Pancreas (tissue), 10 donors: ENCODE measurements at regions of chr17 and their contacts with region 1.

Region 1: DNA sequence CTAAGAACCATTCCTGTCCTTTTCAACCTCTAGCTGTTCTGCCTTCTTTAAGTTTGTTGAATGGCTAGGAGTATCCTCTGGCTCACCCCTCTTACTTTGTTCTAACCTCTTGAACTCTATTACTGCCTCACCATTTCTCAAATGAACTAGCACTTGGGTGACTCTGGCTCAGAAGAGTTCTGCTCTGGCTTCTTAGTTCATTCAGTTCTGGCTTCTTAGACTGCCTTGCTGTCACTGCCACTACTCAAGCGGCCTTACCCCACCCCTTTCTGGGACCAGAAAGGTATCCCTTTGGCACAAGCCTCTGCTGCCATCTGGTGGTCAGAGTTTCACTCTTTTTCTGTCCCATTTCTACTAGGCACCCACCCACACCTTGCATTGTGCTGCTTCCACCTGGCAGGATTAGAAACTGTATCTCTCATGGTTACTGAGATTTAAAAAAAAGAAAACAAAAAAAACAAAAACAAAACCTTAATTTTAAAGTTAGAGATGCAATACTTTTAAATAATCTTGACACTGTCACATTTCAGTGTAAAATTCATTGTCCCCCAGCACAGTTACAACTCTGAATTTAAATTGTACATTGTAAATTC is 6.8 kb upstream of the ABCA10 start:
- DNase-seq: peak in 5 of 6 donors; percentile 46 to 71 (median 60)
- ATAC-seq: peak; percentile 57 to 95 (median 86)
- H3K4me3 ChIP-seq: no peak overlapping the region
- H3K27ac ChIP-seq: no peak overlapping the region
- H3K4me1 ChIP-seq: no peaks in the 10 kb centered on the region
- H3K27me3 ChIP-seq: no peaks in the 10 kb centered on the region
- CTCF ChIP-seq: peak; percentile 13 to 56 (median 44)

Region 2: GRCh38 chr17:68771867-68772515 is 463.4 kb before region 1 on chr17:
- intact Hi-C with region 1: loop called in 2 of 3 experiments (anchors 5 to 10 kb)
- DNase-seq: no peak
- ATAC-seq: peak in 3 of 4 donors; percentile 79 to 87 (median 87)
- H3K4me3 ChIP-seq: no peak overlapping the region
- H3K27ac ChIP-seq: peak overlapping the region in 1 of 4 donors; percentile 22
- H3K4me1 ChIP-seq: peaks cover 0 to 4% (median 0%) of the 10 kb centered on the region in 3 donors
- H3K27me3 ChIP-seq: no peaks in the 10 kb centered on the region
- CTCF ChIP-seq: peak in 3 of 4 donors; percentile 34 to 48 (median 35)

Region 3: DNA sequence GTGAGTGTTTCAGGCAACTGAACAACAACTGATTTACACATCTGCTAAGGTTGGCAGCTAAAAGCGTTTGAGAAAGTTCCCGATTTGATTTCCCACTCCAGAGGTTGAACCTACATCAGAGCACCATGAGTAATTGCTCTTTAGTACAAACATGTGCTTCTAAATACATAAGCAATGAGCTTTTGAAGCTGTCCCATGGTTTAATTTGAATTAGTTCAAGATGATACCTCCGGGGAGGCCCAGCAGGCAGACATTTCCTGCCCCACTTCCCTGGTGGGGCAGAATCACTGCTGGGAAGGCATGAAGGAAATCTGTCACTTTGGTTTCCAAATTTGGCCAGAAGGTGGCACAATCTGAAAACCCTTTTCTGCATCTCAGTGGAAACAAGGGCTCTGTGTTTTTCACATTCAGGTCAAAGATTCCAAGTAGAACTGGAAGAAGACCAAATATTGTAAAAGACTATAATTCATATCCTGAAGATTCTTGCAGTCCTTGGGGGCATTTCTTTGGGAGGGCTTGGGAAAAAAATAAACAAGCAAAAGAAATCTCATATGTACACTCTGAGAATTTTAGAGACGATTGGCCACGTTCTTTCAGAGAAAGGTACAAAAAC is 458.1 kb before region 1 on chr17:
- intact Hi-C with region 1: loop called in 2 of 3 experiments (anchors 5 to 10 kb)
- DNase-seq: peak in 3 of 6 donors; percentile 36 to 64 (median 36)
- ATAC-seq: peak; percentile 84 to 92 (median 90)
- H3K4me3 ChIP-seq: peak overlapping the region in 1 of 4 donors; percentile 10
- H3K27ac ChIP-seq: peak overlapping the region in 1 of 4 donors; percentile 15
- H3K4me1 ChIP-seq: peaks cover 6 to 8% (median 8%) of the 10 kb centered on the region in 3 donors
- H3K27me3 ChIP-seq: no peaks in the 10 kb centered on the region
- CTCF ChIP-seq: peak in 3 of 4 donors; percentile 46 to 66 (median 49)

Region 4: GRCh38 chr17:69030145-69030544 is 205.3 kb before region 1 on chr17:
- intact Hi-C with region 1: no loop called
- DNase-seq: no peak
- ATAC-seq: no peak
- H3K4me3 ChIP-seq: no peak overlapping the region
- H3K27ac ChIP-seq: no peak overlapping the region
- H3K4me1 ChIP-seq: no peaks in the 10 kb centered on the region
- H3K27me3 ChIP-seq: no peaks in the 10 kb centered on the region
- CTCF ChIP-seq: no peak